Naive thymus-derived CD4-positive, alpha-beta T cell (primary cell): ENCODE measurements at regions of chr12 and their contacts with region 1.

Region 1: DNA sequence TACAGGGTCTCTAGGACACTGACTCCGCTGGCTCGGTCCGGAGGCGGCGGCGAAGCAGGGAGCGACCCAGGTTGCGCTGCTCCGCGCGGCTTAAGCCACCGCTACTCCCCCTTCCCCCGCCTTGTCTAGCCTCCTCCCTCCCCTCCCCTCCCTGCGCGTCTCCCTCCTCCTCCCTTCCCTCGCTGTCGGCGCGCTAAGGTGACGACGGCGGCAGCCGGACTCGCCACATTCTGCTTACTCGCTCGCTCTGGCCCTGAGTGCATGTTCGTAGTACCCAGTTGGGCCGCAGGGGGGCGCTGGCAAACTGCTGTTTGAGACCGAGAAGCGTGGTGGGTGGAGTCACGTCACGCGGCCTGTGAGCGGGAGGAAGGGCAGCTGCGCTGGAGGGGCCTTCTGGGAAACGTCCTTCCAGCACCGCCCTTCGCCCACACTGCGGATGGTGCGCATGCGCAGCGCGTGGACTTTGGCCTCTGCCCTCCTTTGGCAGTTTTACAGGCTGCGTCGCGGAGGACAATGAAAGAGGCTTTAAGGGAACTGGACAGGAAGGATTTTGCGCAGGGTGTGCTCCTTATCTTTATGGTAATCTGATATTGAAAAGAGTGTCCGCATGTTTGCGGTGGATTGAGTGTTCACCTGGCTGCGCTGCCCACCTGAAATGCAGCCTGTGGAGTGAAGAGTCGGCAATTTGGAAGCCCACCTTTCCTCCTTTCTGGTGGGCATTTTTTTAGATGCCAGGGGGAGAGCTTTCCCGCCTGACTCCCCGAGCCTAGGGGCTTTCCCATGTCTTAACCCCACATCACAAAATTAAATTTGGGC is at the start of gene SCAF11:
- DNase-seq: peak; percentile 100
- ATAC-seq: peak; percentile 92
- H3K4me3 ChIP-seq: peak within 1 kb of the TSS; percentile 94
- H3K4me3 Mint-ChIP-seq: peak within 1 kb of the TSS; percentile 91 to 99 (median 96)
- H3K27ac ChIP-seq: peak within 1 kb of the TSS; percentile 97
- H3K27ac Mint-ChIP-seq: peak within 1 kb of the TSS; percentile 99 to 100 (median 100)
- H3K4me1 ChIP-seq: peaks cover 21 to 35% of the 10 kb centered on the region in 2 donors
- H3K4me1 Mint-ChIP-seq: peaks cover 36 to 53% (median 47%) of the 10 kb centered on the region in 7 donors
- H3K27me3 ChIP-seq: no peaks in the 10 kb centered on the region
- H3K27me3 Mint-ChIP-seq: peaks cover 0 to 15% (median 0%) of the 10 kb centered on the region in 5 donors
- total RNA-seq, gene SCAF11: 144 to 194 (median 165) TPM

Region 2: DNA sequence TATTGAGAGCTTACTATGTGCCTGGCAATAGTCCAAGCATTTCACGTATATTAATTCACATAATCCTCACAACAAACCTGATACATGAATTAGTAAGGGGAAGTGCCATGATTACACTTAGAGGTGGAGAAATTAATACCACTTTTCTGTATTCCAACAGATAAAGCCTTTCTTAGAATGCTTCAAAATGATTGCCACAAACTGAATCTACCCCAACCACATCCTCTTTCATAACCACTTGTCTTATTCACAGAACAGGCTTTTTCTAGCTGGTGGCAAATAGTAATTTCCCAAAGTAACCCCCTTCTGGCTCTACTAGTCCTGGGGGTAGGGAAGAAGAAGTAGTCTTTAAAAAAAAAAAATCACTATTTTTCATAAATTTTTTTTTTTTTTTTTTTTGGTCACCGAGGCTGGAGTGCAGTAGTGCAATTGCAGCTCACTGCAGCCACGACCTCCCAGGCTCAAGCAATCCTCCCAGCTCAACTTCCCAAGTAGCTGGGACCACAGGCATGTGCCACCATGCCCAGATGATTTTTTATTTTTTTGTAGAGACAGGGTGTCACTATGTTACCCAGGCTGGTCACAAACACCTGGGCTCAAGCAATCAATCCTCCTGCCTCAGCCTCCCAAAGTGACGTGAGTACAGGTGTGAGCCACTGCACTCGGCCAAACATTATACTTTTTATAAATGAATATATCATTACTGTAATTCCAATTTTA is 320.2 kb before region 1 on chr12:
- CTCF ChIA-PET with region 1: no interaction called
- POLR2A ChIA-PET with region 1: no interaction called
- intact Hi-C with region 1: loop called in 1 of 2 experiments (anchors 1 kb)
- DNase-seq: peak in 7 of 9 donors; percentile 36 to 65 (median 47)
- ATAC-seq: peak; percentile 79
- H3K4me3 ChIP-seq: no peak overlapping the region
- H3K4me3 Mint-ChIP-seq: peak overlapping the region; percentile 3 to 76 (median 53)
- H3K27ac ChIP-seq: no peak overlapping the region
- H3K27ac Mint-ChIP-seq: peak overlapping the region in 2 of 9 donors; percentile 0 to 19
- H3K4me1 ChIP-seq: peaks cover 25 to 30% of the 10 kb centered on the region in 2 donors
- H3K4me1 Mint-ChIP-seq: peaks cover 13 to 39% (median 28%) of the 10 kb centered on the region in 7 donors
- H3K27me3 ChIP-seq: no peaks in the 10 kb centered on the region
- H3K27me3 Mint-ChIP-seq: peaks cover 0 to 7% (median 0%) of the 10 kb centered on the region in 5 donors

Region 3: GRCh38 chr12:45849289-45849688 is 141.4 kb before region 1 on chr12:
- CTCF ChIA-PET with region 1: no interaction called
- POLR2A ChIA-PET with region 1: no interaction called
- intact Hi-C with region 1: no loop called
- DNase-seq: no peak
- ATAC-seq: no peak
- H3K4me3 ChIP-seq: no peak overlapping the region
- H3K4me3 Mint-ChIP-seq: no peak overlapping the region
- H3K27ac ChIP-seq: no peak overlapping the region
- H3K27ac Mint-ChIP-seq: no peak overlapping the region
- H3K4me1 ChIP-seq: no peaks in the 10 kb centered on the region
- H3K4me1 Mint-ChIP-seq: peaks cover 0 to 5% (median 0%) of the 10 kb centered on the region in 7 donors
- H3K27me3 ChIP-seq: no peaks in the 10 kb centered on the region
- H3K27me3 Mint-ChIP-seq: no peaks in the 10 kb centered on the region

Region 4: GRCh38 chr12:46153268-46153872 is 162.7 kb after region 1 on chr12:
- CTCF ChIA-PET with region 1: no interaction called
- POLR2A ChIA-PET with region 1: no interaction called
- intact Hi-C with region 1: loop called in 1 of 2 experiments (anchors 1 kb)
- DNase-seq: peak in 6 of 9 donors; percentile 26 to 61 (median 47)
- ATAC-seq: no peak
- H3K4me3 ChIP-seq: no peak overlapping the region
- H3K4me3 Mint-ChIP-seq: peak overlapping the region in 4 of 10 donors; percentile 31 to 52 (median 40)
- H3K27ac ChIP-seq: no peak overlapping the region
- H3K27ac Mint-ChIP-seq: no peak overlapping the region
- H3K4me1 ChIP-seq: peaks cover 0 to 17% of the 10 kb centered on the region in 2 donors
- H3K4me1 Mint-ChIP-seq: peaks cover 3 to 31% (median 13%) of the 10 kb centered on the region in 7 donors
- H3K27me3 ChIP-seq: no peaks in the 10 kb centered on the region
- H3K27me3 Mint-ChIP-seq: peaks cover 0 to 19% (median 4%) of the 10 kb centered on the region in 5 donors

Region 5: DNA sequence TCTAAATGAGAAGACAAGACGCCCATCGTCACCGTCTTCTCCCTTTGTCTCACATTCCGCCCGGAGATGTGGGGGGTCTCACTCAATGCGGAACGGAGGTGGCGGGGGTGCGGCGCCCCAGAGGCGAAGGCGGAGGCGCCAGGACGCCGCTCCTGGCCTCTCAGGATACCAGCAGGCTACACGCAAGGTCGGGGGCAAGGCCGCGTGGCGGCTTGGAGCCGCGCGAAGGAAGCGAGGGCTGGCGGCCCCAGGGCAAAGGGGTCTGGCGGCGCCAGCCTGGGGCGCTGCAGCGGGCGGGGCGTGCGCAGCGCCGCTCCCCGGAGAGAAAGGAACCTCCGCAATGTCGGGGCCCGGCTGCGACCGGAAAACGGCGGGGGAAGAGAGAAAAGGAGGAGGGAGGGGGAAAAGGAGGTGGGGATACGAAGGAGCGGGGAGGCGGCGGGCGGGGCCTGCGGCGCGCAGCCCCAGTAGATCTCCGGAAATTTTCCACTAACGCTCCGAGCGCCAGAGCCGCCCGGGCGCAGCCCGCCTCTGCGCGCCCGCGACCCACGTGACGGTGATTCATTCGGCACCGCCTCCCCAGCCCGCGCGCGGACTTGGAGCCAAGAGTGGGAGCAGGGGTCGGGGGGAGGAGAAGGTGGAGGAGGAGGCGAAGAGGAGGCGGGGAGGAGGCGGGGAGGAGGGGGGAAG is 392.4 kb after region 1 on chr12:
- CTCF ChIA-PET with region 1: no interaction called
- POLR2A ChIA-PET with region 1: no interaction called
- intact Hi-C with region 1: loop called (anchors 1 kb)
- DNase-seq: peak; percentile 76 to 96 (median 90)
- ATAC-seq: peak; percentile 89
- H3K4me3 ChIP-seq: peak overlapping the region; percentile 61
- H3K4me3 Mint-ChIP-seq: peak overlapping the region; percentile 82 to 95 (median 91)
- H3K27ac ChIP-seq: peak overlapping the region; percentile 94
- H3K27ac Mint-ChIP-seq: peak overlapping the region; percentile 90 to 98 (median 97)
- H3K4me1 ChIP-seq: peaks cover 5 to 25% of the 10 kb centered on the region in 2 donors
- H3K4me1 Mint-ChIP-seq: peaks cover 24 to 53% (median 47%) of the 10 kb centered on the region in 7 donors
- H3K27me3 ChIP-seq: no peaks in the 10 kb centered on the region
- H3K27me3 Mint-ChIP-seq: no peaks in the 10 kb centered on the region

Region 6: GRCh38 chr12:47021298-47021697 is 1030.6 kb after region 1 on chr12:
- CTCF ChIA-PET with region 1: no interaction called
- POLR2A ChIA-PET with region 1: no interaction called
- intact Hi-C with region 1: loop called in 1 of 2 experiments (anchors 2 kb)
- DNase-seq: peak in 7 of 9 donors; percentile 7 to 55 (median 51)
- ATAC-seq: peak; percentile 68
- H3K4me3 ChIP-seq: no peak overlapping the region
- H3K4me3 Mint-ChIP-seq: no peak overlapping the region
- H3K27ac ChIP-seq: no peak overlapping the region
- H3K27ac Mint-ChIP-seq: no peak overlapping the region
- H3K4me1 ChIP-seq: no peaks in the 10 kb centered on the region
- H3K4me1 Mint-ChIP-seq: no peaks in the 10 kb centered on the region
- H3K27me3 ChIP-seq: peaks cover 0 to 3% of the 10 kb centered on the region in 2 donors
- H3K27me3 Mint-ChIP-seq: peaks cover 4 to 31% (median 10%) of the 10 kb centered on the region in 5 donors

Region 7: DNA sequence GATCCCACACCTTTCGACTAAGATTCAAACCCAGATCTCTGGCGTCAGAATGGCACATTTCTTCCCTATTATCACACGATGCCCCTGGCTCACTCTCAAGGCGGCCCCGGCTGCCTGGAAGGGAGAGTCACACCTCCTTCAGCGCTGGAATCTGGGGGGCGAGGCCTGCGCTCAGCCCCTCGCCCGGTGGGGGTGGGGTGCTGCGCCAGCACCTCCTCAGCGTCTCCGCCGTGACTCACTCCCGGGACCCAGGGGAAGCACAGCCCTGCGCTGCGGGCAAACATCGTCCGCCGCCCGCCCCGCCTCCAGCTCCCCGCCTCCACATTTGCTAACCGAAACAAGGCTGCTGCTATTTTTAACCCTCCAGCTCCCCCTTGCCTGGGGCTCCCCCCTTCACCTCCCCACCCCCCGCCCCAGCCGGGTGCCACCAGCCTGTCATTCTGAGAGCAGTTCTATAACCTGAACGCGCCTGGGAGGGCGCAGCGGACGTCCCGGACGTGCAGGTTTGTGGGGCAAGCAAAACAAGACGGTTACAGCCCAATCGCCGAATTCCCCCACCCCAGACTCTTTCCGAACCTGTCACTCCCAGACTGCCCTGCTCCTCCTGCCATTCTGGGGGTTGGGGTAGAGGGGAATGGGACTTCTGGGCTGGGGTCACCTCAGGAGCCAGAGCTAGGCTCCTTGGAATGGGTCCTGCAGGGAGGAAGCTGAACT is 1822.3 kb after region 1 on chr12:
- CTCF ChIA-PET with region 1: no interaction called
- POLR2A ChIA-PET with region 1: no interaction called
- intact Hi-C with region 1: loop called in 1 of 2 experiments (anchors 10 kb)
- DNase-seq: peak; percentile 61 to 95 (median 85)
- ATAC-seq: peak; percentile 84
- H3K4me3 ChIP-seq: peak overlapping the region; percentile 80
- H3K4me3 Mint-ChIP-seq: peak overlapping the region; percentile 83 to 96 (median 88)
- H3K27ac ChIP-seq: peak overlapping the region; percentile 88
- H3K27ac Mint-ChIP-seq: peak overlapping the region; percentile 92 to 99 (median 97)
- H3K4me1 ChIP-seq: peaks cover 85 to 87% of the 10 kb centered on the region in 2 donors
- H3K4me1 Mint-ChIP-seq: peaks cover 77 to 100% (median 90%) of the 10 kb centered on the region in 7 donors
- H3K27me3 ChIP-seq: no peaks in the 10 kb centered on the region
- H3K27me3 Mint-ChIP-seq: no peaks in the 10 kb centered on the region